ENCODE measurements at regions of chr6 and their contacts with region 1.

Region 1: DNA sequence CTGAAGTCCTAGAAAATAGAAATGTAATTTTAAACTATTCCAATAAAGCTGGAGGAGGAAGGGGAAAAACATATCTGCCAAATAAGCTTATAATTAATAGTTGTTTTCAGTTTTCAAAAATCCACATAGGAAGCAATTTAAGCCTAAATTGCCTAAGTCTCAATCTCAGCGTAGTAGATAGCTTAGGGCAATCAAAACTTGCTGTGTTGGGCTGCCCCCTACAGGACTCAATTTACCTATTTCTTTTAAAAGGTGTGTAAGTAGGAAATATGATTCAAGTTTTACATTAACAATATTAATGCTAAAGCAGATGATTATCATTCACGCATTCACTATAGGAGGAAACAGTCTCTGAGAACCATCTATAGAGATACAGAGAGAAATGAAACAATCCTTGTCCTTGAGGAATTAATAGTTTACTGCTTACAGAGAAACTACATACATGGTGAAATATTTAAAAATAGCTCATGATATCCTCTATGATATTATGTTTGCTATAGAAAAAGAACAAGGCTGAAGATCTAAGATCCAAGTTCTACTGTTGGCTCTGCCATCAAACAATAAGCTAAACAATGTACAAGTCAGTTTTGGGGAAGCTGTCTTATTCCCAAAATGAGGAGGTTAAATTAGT is 102.1 kb downstream of the ATG5 start:
- DNase-seq: peak; percentile 44 to 88
- ATAC-seq: peak; percentile 90 to 91 (median 91)
- H3K4me3 ChIP-seq: no peak overlapping the region
- H3K4me3 Mint-ChIP-seq: no peak overlapping the region
- H3K27ac ChIP-seq: no peak overlapping the region
- H3K27ac Mint-ChIP-seq: peak overlapping the region in 1 of 2 donors; percentile 67
- H3K4me1 ChIP-seq: no peaks in the 10 kb centered on the region
- H3K4me1 Mint-ChIP-seq: peaks cover 17 to 22% of the 10 kb centered on the region in 2 donors
- H3K27me3 ChIP-seq: no peaks in the 10 kb centered on the region
- H3K27me3 Mint-ChIP-seq: no peaks in the 10 kb centered on the region
- CTCF ChIP-seq: peak; percentile 83

Region 2: DNA sequence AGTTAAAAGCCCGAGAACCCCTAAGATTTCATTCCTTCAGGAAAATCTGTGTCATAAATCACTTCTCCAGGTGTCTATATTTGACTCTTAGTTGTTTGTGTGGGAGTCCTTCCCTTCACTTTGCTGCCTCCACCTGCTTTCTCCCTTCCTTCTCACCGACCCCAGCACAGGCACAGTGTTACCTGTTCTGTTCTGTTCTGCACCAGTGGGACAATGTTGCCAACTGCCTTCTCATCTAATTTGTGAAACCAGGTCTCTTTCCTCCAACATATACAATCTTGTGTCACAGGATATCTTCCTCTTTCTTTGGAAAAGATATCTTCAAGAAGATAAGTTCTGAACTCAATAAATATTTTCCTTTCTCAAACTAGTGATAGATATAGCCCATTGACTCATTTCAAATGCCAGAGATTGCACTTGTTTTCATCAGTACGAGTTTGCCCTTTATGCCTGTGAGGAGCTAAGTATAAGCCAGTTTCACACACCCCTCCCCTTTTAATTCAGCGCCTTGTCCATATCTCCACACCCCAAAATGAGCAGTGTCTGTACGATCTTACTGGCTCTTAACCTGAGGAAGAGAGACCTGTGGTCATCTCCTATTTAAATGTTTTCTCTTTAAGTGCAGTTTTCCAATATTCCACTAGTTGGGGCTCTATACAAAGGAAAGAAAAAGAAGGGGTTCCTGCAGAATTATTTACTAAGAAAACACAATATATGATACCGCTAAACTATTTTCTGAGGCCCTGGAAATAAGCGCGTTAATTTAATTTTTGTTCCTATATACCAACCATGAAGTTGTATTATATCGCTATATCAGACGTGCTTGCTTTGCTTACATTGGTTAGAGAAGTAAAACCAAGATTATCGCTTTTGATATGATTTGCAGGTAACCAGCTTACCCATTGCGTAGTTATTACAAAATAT is 738.9 kb before region 1 on chr6:
- intact Hi-C with region 1: loop called (anchors 1 kb)
- DNase-seq: peak in 1 of 2 donors; percentile 62
- ATAC-seq: peak; percentile 70 to 77 (median 70)
- H3K4me3 ChIP-seq: no peak overlapping the region
- H3K4me3 Mint-ChIP-seq: peak overlapping the region; percentile 7
- H3K27ac ChIP-seq: peak overlapping the region; percentile 36
- H3K27ac Mint-ChIP-seq: peak overlapping the region; percentile 6 to 51
- H3K4me1 ChIP-seq: peaks cover 6% of the 10 kb centered on the region
- H3K4me1 Mint-ChIP-seq: peaks cover 28% of the 10 kb centered on the region in 2 donors
- H3K27me3 ChIP-seq: no peaks in the 10 kb centered on the region
- H3K27me3 Mint-ChIP-seq: no peaks in the 10 kb centered on the region
- CTCF ChIP-seq: peak; percentile 87

Region 3: DNA sequence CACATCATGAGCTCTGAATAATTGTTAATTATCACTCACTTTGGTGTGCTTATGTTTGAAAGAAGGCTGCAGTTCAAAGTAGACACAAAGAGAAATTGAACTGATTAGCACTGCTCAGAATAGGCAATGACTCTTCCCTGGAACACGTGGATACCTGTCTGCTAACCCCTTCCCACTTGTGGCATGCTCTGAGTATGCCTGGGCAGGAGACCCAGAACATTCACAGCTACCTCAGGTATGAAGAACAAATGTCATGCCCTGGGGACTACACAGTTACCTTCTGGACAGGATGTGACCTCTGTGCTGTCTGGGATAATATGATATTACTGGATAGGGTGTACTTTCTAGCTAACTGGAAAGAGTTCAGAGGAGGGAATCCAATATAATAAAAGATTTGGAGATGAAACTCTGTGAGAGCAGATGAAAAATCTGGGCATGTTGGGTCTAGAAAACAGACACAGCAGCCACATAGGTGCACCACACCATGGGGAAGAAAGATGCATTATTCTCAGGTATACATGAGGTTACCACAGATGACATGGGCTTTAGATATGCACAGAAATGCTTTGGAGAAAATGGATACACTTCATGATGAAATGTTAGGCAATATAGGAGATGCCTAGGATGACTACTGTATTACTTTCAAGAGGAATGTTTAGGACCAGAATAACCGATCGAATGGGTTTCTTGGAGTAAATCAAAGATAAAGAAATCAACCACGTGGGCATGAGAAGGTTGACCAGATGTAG is 496.3 kb before region 1 on chr6:
- intact Hi-C with region 1: no loop called
- DNase-seq: no peak
- ATAC-seq: no peak
- H3K4me3 ChIP-seq: no peak overlapping the region
- H3K4me3 Mint-ChIP-seq: no peak overlapping the region
- H3K27ac ChIP-seq: no peak overlapping the region
- H3K27ac Mint-ChIP-seq: no peak overlapping the region
- H3K4me1 ChIP-seq: no peaks in the 10 kb centered on the region
- H3K4me1 Mint-ChIP-seq: no peaks in the 10 kb centered on the region
- H3K27me3 ChIP-seq: no peaks in the 10 kb centered on the region
- H3K27me3 Mint-ChIP-seq: no peaks in the 10 kb centered on the region
- CTCF ChIP-seq: no peak

Region 4: DNA sequence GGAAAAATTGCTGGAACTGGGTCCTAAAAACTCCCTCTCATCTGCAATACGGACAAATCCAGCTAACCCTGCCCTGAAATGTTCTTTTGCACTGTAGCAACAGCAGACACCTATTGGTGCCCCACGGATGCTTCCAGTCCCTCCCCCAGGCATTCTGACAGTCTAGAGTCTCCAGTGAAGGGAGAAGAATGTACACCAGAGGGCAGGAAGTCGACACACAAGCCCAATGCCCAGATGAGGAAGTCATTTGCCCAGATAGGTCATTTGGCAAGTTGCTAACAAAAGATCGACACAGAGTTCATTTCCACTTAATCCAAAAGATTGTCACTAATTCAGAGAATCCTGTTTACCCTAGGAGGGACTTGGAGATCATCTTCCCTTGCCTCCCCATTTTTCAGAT is 430.3 kb before region 1 on chr6:
- intact Hi-C with region 1: loop called (anchors 1 kb)
- DNase-seq: peak in 1 of 2 donors; percentile 50
- ATAC-seq: peak in 2 of 3 donors; percentile 40 to 58
- H3K4me3 ChIP-seq: no peak overlapping the region
- H3K4me3 Mint-ChIP-seq: no peak overlapping the region
- H3K27ac ChIP-seq: no peak overlapping the region
- H3K27ac Mint-ChIP-seq: no peak overlapping the region
- H3K4me1 ChIP-seq: peaks cover 3% of the 10 kb centered on the region
- H3K4me1 Mint-ChIP-seq: peaks cover 5 to 7% of the 10 kb centered on the region in 2 donors
- H3K27me3 ChIP-seq: no peaks in the 10 kb centered on the region
- H3K27me3 Mint-ChIP-seq: no peaks in the 10 kb centered on the region
- CTCF ChIP-seq: no peak

Region 5: GRCh38 chr6:106085984-106086813 is 137.2 kb before region 1 on chr6 and contains the start of gene PRDM1:
- intact Hi-C with region 1: loop called (anchors 2 kb)
- DNase-seq: peak; percentile 75 to 93
- ATAC-seq: peak; percentile 90 to 97 (median 93)
- H3K4me3 ChIP-seq: peak within 1 kb of the TSS; percentile 54
- H3K4me3 Mint-ChIP-seq: peak within 1 kb of the TSS; percentile 94
- H3K27ac ChIP-seq: peak within 1 kb of the TSS; percentile 47
- H3K27ac Mint-ChIP-seq: peak within 1 kb of the TSS; percentile 88 to 97
- H3K4me1 ChIP-seq: peaks cover 32% of the 10 kb centered on the region
- H3K4me1 Mint-ChIP-seq: peaks cover 72 to 74% of the 10 kb centered on the region in 2 donors
- H3K27me3 ChIP-seq: no peaks in the 10 kb centered on the region
- H3K27me3 Mint-ChIP-seq: no peaks in the 10 kb centered on the region
- CTCF ChIP-seq: peak; percentile 15
- total RNA-seq, gene PRDM1: 165 to 180 (median 177) TPM

Region 6: GRCh38 chr6:106275692-106276091 is 52.3 kb after region 1 on chr6:
- intact Hi-C with region 1: no loop called
- DNase-seq: no peak
- ATAC-seq: no peak
- H3K4me3 ChIP-seq: no peak overlapping the region
- H3K4me3 Mint-ChIP-seq: no peak overlapping the region
- H3K27ac ChIP-seq: no peak overlapping the region
- H3K27ac Mint-ChIP-seq: no peak overlapping the region
- H3K4me1 ChIP-seq: no peaks in the 10 kb centered on the region
- H3K4me1 Mint-ChIP-seq: peaks cover 14 to 18% of the 10 kb centered on the region in 2 donors
- H3K27me3 ChIP-seq: no peaks in the 10 kb centered on the region
- H3K27me3 Mint-ChIP-seq: no peaks in the 10 kb centered on the region
- CTCF ChIP-seq: no peak

Region 7: GRCh38 chr6:106431972-106432371 is 208.6 kb after region 1 on chr6:
- intact Hi-C with region 1: no loop called
- DNase-seq: no peak
- ATAC-seq: no peak
- H3K4me3 ChIP-seq: no peak overlapping the region
- H3K4me3 Mint-ChIP-seq: no peak overlapping the region
- H3K27ac ChIP-seq: no peak overlapping the region
- H3K27ac Mint-ChIP-seq: no peak overlapping the region
- H3K4me1 ChIP-seq: no peaks in the 10 kb centered on the region
- H3K4me1 Mint-ChIP-seq: no peaks in the 10 kb centered on the region
- H3K27me3 ChIP-seq: no peaks in the 10 kb centered on the region
- H3K27me3 Mint-ChIP-seq: no peaks in the 10 kb centered on the region
- CTCF ChIP-seq: no peak

Measured in natural killer cell (primary cell).